ENCODE measurements at regions of chr1 and their contacts with region 1.

Region 1: DNA sequence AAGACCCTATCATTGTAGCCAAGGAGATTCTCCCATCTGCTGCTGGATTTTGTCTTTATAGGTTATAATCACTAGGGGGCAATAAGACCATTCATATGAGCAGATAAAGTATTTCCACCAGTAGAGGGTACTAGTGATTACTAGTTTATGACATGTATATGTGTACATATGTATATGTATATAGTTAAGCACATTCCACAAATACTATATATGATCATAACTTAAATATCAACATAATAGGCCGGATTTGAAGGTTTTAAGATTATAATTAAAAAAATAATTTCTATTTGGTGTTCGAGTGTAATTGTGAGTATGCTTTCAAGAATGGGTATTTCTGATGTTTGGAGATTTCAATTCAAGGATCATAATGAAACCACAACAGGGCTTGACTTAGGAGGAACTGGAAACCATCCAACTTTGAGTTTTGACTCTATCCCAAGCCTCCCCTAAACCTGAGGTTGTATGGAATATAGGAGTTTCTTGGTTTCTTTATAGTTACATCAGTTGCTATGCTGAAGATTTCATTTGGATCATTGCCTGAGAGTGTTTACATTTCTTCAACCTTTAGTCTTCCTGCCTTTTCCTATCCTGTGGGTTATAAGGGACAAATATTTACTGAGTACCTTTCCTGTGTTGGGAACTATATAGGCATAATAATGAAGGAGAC is 16.9 kb downstream of the TCEANC2 start:
- DNase-seq: no peak
- ATAC-seq: peak; percentile 75
- H3K4me3 ChIP-seq: no peak overlapping the region
- H3K27ac ChIP-seq: no peak overlapping the region
- H3K4me1 ChIP-seq: no peaks in the 10 kb centered on the region
- H3K27me3 ChIP-seq: no peaks in the 10 kb centered on the region
- CTCF ChIP-seq: peak; percentile 72 to 93 (median 88)
- POLR2A ChIP-seq: no peak

Region 2: DNA sequence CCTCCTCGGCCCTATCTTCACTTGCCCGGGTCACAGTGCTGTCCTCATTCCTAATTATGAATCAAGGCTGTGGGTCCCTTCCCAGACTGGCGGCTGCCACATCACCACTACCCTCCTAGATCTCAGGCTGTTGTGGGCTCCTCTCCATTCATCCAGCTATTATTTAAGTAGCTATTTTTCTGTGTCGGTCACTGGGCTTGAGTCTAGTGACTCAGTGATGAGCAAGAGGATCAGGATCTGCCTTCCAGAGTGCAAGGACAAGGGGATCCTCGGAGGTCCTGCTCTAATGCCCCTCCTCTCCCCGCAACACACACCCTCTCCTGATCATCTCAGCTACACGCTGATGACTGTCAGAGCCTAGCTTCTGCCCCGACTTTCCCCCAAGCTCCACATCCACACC is 48.4 kb after region 1 on chr1:
- intact Hi-C with region 1: no loop called
- DNase-seq: no peak
- ATAC-seq: no peak
- H3K4me3 ChIP-seq: no peak overlapping the region
- H3K27ac ChIP-seq: no peak overlapping the region
- H3K4me1 ChIP-seq: peaks cover 18% of the 10 kb centered on the region
- H3K27me3 ChIP-seq: no peaks in the 10 kb centered on the region
- CTCF ChIP-seq: no peak
- POLR2A ChIP-seq: no peak

Region 3: GRCh38 chr1:54199765-54200518 is 129.6 kb after region 1 on chr1 and contains the starts of genes CYB5RL and MRPL37:
- intact Hi-C with region 1: loop called (anchors 10 kb)
- DNase-seq: peak; percentile 93 to 97 (median 94)
- ATAC-seq: peak; percentile 99
- H3K4me3 ChIP-seq: peak within 1 kb of the TSS; percentile 95 to 99
- H3K27ac ChIP-seq: peak within 1 kb of the TSS; percentile 65 to 86 (median 84)
- H3K4me1 ChIP-seq: peaks cover 30% of the 10 kb centered on the region
- H3K27me3 ChIP-seq: no peaks in the 10 kb centered on the region
- CTCF ChIP-seq: peak in 1 of 7 experiments; percentile 7
- POLR2A ChIP-seq: peak in 2 of 3 donors; percentile 73 to 74
- total RNA-seq, gene CYB5RL: 6.5 to 13.2 TPM
- total RNA-seq, gene MRPL37: 34.9 to 41.8 TPM

Region 4: DNA sequence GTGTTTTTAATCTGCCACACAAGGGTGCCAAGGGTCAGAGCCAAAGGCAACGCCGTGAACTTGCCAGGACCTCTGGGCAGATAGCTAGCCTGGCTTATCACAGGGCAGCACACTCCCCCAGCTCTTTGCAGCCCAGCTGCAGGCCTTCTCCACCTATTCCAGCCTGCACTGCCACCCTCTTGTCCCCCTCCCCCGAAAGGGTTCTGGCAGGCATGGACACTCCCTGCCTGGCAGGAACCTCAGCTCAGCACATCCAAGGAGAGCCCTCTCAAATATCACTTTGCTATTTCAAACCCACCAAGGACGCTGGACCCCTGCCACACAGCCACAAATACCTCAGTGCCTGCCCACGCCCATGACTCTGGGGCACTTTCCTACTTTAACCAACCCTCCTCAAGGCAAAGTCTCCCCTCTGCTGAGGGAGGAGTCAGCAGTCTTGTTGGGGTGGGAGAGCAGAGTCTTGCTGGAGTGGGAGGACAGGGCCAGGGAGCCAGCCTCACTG is 326.8 kb after region 1 on chr1:
- intact Hi-C with region 1: loop called (anchors 10 kb)
- DNase-seq: peak in 3 of 4 donors; percentile 31 to 63 (median 52)
- ATAC-seq: peak; percentile 45
- H3K4me3 ChIP-seq: no peak overlapping the region
- H3K27ac ChIP-seq: peak overlapping the region in 1 of 4 donors; percentile 24
- H3K4me1 ChIP-seq: peaks cover 48% of the 10 kb centered on the region
- H3K27me3 ChIP-seq: no peaks in the 10 kb centered on the region
- CTCF ChIP-seq: no peak
- POLR2A ChIP-seq: no peak